ENCODE measurements at regions of chr11 and their contacts with region 1.

Region 1: DNA sequence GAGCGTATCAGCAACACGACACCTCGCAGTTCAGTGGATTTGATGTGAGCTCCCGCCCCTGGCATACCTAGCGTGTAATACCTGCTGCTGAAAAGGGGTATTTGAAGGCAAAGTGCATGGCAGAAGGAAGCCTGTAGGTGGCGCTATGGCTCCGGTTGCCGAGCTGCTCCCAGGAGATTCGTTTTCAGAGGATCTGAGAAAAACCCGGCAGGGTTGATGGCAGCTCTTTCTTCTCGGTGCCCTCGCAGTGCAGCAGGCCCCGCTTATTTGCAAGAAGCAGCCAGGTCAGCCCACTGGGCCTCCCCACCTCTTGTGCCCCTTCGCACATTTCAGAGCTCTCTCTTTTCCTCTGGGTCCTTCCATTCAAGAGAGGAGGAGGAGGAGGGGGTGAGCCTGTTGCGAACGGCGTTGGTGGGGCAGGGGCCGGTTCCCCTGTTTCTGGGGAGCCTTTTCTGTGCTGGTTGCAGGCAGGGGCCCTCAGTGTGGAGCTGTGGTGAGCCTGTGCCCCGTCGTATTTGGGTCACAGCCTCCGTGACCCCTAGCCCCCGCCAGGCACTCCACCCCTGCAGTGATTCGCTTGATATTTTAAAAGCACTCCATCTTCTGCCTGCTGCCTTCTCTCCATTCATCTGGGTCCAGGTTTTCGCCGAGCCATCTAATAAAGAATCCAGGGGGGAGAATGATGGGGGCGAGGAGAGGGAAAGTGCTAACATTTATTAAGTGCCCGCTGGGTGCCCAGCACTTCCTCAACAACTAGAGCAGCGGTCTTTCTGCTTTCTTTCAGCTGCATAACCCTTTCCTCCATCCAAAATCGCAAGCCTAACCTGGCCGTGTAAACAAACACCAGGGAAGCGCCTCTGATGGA is 85.3 kb upstream of the SYT13 start:
- DNase-seq: peak; percentile 17 to 41 (median 26)
- H3K4me3 ChIP-seq: no peak overlapping the region
- H3K4me3 Mint-ChIP-seq: peak overlapping the region in 1 of 2 donors; percentile 52
- H3K27ac ChIP-seq: no peak overlapping the region
- H3K27ac Mint-ChIP-seq: no peak overlapping the region
- H3K4me1 ChIP-seq: no peaks in the 10 kb centered on the region
- H3K4me1 Mint-ChIP-seq: peaks cover 9% of the 10 kb centered on the region
- H3K27me3 ChIP-seq: peaks cover 0 to 43% of the 10 kb centered on the region in 2 donors
- H3K27me3 Mint-ChIP-seq: peaks cover 38 to 66% (median 46%) of the 10 kb centered on the region in 3 donors
- CTCF ChIP-seq: peak; percentile 82

Region 2: GRCh38 chr11:45655347-45655756 is 283.9 kb after region 1 on chr11:
- intact Hi-C with region 1: loop called in 1 of 2 experiments (anchors 2 kb)
- DNase-seq: peak; percentile 13 to 35 (median 25)
- H3K4me3 ChIP-seq: no peak overlapping the region
- H3K4me3 Mint-ChIP-seq: no peak overlapping the region
- H3K27ac ChIP-seq: no peak overlapping the region
- H3K27ac Mint-ChIP-seq: no peak overlapping the region
- H3K4me1 ChIP-seq: peaks cover 4% of the 10 kb centered on the region in 2 donors
- H3K4me1 Mint-ChIP-seq: peaks cover 9% of the 10 kb centered on the region
- H3K27me3 ChIP-seq: peaks cover 2 to 40% of the 10 kb centered on the region in 2 donors
- H3K27me3 Mint-ChIP-seq: peaks cover 55 to 60% (median 57%) of the 10 kb centered on the region in 3 donors
- CTCF ChIP-seq: peak; percentile 87

Region 3: GRCh38 chr11:45993531-45994001 is 622.1 kb after region 1 on chr11:
- intact Hi-C with region 1: no loop called
- DNase-seq: no peak
- H3K4me3 ChIP-seq: no peak overlapping the region
- H3K4me3 Mint-ChIP-seq: no peak overlapping the region
- H3K27ac ChIP-seq: no peak overlapping the region
- H3K27ac Mint-ChIP-seq: peak overlapping the region in 2 of 7 donors; percentile 26 to 34
- H3K4me1 ChIP-seq: no peaks in the 10 kb centered on the region
- H3K4me1 Mint-ChIP-seq: no peaks in the 10 kb centered on the region
- H3K27me3 ChIP-seq: no peaks in the 10 kb centered on the region
- H3K27me3 Mint-ChIP-seq: no peaks in the 10 kb centered on the region
- CTCF ChIP-seq: no peak